CD4-positive, alpha-beta memory T cell (primary cell): ENCODE measurements at regions of chr14 and their contacts with region 1.

Region 1: DNA sequence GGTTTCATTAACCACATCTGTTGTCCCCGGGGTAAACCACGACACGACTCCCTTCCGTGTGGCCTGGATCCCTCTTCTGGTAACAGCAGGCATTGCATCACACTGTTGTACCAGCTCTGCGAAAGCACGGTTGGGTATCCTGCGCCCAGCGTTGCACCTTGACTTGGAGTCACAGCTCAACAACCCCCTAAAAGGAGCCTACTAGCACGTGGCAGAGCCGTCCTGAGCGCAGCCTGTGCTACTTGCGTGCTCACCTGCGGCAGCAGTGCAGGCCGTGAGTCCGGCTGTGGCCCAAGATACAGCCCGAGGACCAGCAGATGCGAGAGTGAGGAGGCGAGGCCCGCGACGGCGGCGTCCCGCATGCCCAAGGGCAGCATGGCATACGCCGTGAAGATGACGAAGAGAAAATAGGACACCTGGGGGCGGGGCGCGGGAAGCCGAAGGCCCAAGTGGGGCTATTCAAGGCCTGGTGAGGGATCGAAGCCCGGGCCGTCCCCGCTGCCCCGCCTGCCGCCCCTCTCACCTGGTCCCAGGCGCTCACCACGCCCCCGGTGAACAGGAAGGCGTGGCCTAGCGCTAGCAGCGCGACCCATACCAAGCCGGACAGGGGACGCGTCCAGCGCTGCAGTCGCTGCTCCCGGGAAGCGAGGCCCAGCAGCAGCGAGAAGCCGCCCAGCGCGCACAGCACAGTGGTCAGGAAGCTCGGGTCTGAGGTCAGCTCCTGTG is 2.4 kb downstream of the ADCY4 start:
- DNase-seq: peak; percentile 89 to 92 (median 90)
- H3K4me3 ChIP-seq: peak overlapping the region; percentile 24 to 51
- H3K4me3 Mint-ChIP-seq: peak overlapping the region; percentile 76 to 93 (median 87)
- H3K27ac ChIP-seq: no peak overlapping the region
- H3K27ac Mint-ChIP-seq: peak overlapping the region; percentile 65 to 98 (median 86)
- H3K4me1 ChIP-seq: peaks cover 64% of the 10 kb centered on the region
- H3K4me1 Mint-ChIP-seq: peaks cover 40 to 91% (median 59%) of the 10 kb centered on the region in 4 donors
- H3K27me3 ChIP-seq: peaks cover 11% of the 10 kb centered on the region
- H3K27me3 Mint-ChIP-seq: peaks cover 6 to 13% of the 10 kb centered on the region in 2 donors

Region 2: DNA sequence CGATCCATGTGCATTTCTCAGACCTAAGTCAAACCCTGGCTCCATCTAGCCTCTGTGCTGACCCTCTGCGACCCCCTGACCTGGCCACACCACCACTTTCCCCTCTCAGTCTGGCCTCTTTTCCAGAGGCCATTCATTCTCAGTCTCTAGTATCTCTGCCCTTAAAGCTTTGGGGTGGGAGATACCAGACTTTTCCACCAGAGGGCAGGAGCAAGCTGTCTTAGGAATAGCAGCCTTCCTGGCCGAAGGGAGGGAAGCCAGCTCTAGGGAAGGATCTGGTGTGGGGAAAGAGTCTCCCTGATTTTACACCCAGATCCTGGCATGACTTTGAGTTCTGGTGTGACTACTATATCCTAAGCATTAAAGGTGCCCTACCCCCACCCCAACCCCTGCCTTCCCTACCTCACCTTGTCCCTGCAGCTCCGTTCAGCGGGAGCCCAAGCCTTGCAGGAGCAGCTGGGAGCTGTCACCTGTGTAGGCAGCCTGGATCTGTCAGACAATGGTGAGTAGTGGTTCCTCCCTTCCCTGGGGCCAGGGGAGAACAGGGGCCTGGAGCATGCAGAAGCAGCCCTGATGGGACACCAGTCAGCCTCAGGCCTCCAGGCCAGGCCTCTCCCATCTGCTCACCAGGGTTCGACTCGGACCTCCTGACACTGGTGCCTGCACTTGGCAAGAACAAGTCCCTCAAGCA is 274.0 kb before region 1 on chr14:
- CTCF ChIA-PET with region 1: interaction called, 4 read pairs
- POLR2A ChIA-PET with region 1: no interaction called
- intact Hi-C with region 1: loop called (anchors 1 kb)
- DNase-seq: peak; percentile 49 to 63 (median 61)
- H3K4me3 ChIP-seq: no peak overlapping the region
- H3K4me3 Mint-ChIP-seq: peak overlapping the region in 1 of 8 donors; percentile 59
- H3K27ac ChIP-seq: no peak overlapping the region
- H3K27ac Mint-ChIP-seq: peak overlapping the region in 6 of 7 donors; percentile 10 to 81 (median 36)
- H3K4me1 ChIP-seq: no peaks in the 10 kb centered on the region
- H3K4me1 Mint-ChIP-seq: peaks cover 2 to 8% (median 3%) of the 10 kb centered on the region in 4 donors
- H3K27me3 ChIP-seq: no peaks in the 10 kb centered on the region
- H3K27me3 Mint-ChIP-seq: peaks cover 2% of the 10 kb centered on the region in 2 donors

Region 3: DNA sequence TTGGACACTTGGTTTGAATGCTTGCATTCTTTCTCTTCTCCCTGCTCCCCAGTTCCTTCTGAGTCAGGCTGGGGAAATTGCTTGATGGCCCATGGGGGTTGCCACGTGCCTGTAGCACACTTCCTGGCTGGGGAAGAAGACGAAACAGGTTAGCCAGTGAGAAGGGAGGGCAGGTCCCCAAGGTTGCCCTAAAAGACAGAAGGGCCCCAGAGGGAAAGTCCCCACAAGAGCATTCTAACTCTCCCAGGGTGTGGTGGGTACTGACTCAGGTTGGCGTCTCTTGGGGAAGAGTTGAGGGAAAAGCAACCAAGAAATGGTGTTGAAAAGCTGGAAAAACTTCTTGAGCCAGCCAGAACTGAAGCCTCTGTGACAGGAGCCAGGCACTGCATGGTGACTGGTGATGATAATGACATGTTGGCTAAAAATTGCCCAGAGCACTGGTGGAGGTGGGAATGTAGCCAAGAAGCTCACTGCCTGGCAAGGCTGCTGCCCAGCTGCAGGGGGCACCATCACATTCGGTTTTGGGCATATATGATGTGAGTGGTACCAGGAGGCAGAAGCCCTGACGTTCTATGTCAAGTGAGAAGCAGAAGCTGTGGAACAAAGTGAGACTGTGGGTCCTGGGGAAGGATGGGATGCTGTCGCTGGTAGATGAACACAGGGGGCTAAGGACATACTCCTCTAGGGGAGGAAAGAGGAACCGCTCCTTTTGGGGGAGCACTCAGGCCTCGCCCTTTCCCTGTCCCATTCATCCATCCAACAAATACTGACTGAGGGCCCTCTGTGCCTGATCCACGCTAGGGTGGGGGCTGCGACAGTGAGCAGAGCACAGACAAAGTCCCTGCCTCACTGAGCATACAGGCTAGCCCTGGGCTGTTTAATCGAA is 52.9 kb before region 1 on chr14:
- CTCF ChIA-PET with region 1: interaction called, 13 read pairs
- POLR2A ChIA-PET with region 1: interaction called, 4 read pairs
- intact Hi-C with region 1: no loop called
- DNase-seq: peak; percentile 46 to 85 (median 51)
- H3K4me3 ChIP-seq: no peak overlapping the region
- H3K4me3 Mint-ChIP-seq: peak overlapping the region in 4 of 8 donors; percentile 43 to 67 (median 46)
- H3K27ac ChIP-seq: peak overlapping the region; percentile 37
- H3K27ac Mint-ChIP-seq: peak overlapping the region; percentile 75 to 95 (median 91)
- H3K4me1 ChIP-seq: peaks cover 23% of the 10 kb centered on the region
- H3K4me1 Mint-ChIP-seq: peaks cover 21 to 44% (median 30%) of the 10 kb centered on the region in 4 donors
- H3K27me3 ChIP-seq: no peaks in the 10 kb centered on the region
- H3K27me3 Mint-ChIP-seq: no peaks in the 10 kb centered on the region

Region 4: GRCh38 chr14:24310646-24311604 is 21.5 kb before region 1 on chr14 and contains the start of gene LTB4R:
- CTCF ChIA-PET with region 1: interaction called, 232 read pairs
- POLR2A ChIA-PET with region 1: interaction called, 75 read pairs
- intact Hi-C with region 1: loop called (anchors 1 kb)
- DNase-seq: peak; percentile 73 to 79 (median 77)
- H3K4me3 ChIP-seq: peak within 1 kb of the TSS; percentile 55 to 58
- H3K4me3 Mint-ChIP-seq: peak within 1 kb of the TSS; percentile 83 to 94 (median 88)
- H3K27ac ChIP-seq: peak within 1 kb of the TSS; percentile 72
- H3K27ac Mint-ChIP-seq: peak within 1 kb of the TSS; percentile 90 to 97 (median 95)
- H3K4me1 ChIP-seq: peaks cover 71% of the 10 kb centered on the region
- H3K4me1 Mint-ChIP-seq: peaks cover 58 to 89% (median 72%) of the 10 kb centered on the region in 4 donors
- H3K27me3 ChIP-seq: no peaks in the 10 kb centered on the region
- H3K27me3 Mint-ChIP-seq: no peaks in the 10 kb centered on the region
- total RNA-seq, gene LTB4R: 19.5 to 20.0 TPM

Region 5: GRCh38 chr14:24343795-24344660 is 11.6 kb after region 1 on chr14:
- CTCF ChIA-PET with region 1: interaction called, 46 read pairs
- POLR2A ChIA-PET with region 1: interaction called, 6 read pairs
- intact Hi-C with region 1: no loop called
- DNase-seq: no peak
- H3K4me3 ChIP-seq: no peak overlapping the region
- H3K4me3 Mint-ChIP-seq: no peak overlapping the region
- H3K27ac ChIP-seq: no peak overlapping the region
- H3K27ac Mint-ChIP-seq: no peak overlapping the region
- H3K4me1 ChIP-seq: peaks cover 10% of the 10 kb centered on the region
- H3K4me1 Mint-ChIP-seq: peaks cover 7 to 16% (median 10%) of the 10 kb centered on the region in 4 donors
- H3K27me3 ChIP-seq: no peaks in the 10 kb centered on the region
- H3K27me3 Mint-ChIP-seq: peaks cover 12 to 23% of the 10 kb centered on the region in 2 donors

Region 6: DNA sequence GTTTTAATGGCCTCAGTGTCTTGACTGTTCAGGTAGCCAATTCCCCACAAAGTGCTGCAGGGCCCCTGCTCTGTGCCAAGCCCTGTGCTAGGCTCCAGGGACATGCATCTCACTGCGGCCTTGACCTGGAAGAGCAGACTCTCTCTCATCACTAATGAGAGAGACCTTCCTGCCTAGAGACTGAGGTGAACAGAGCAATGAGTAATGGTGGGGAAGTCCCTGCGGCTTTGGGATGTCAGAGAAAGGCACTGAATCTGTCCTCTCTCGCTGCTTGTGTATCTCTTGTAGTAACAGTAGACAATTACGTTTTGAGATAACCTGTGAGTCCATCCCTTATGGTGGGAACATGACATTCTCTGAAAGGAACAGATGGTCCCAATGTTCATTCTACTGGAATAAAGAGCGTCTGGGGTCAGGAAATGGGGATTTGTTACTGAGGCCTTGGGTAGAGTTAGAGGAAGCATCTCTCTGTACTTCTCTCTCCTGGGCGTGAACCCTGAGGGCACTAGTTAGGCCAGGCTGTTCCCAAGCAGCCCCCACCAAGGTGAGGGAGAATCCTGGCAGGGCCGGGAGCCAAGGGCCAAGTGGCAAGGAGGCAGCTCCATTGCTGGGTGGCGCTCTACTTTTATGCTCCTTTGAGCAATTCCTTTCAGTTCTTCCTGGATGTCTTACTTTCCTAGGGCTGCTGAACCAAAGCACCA is 49.1 kb after region 1 on chr14:
- CTCF ChIA-PET with region 1: no interaction called
- POLR2A ChIA-PET with region 1: no interaction called
- intact Hi-C with region 1: no loop called
- DNase-seq: no peak
- H3K4me3 ChIP-seq: no peak overlapping the region
- H3K4me3 Mint-ChIP-seq: peak overlapping the region in 1 of 8 donors; percentile 22
- H3K27ac ChIP-seq: no peak overlapping the region
- H3K27ac Mint-ChIP-seq: no peak overlapping the region
- H3K4me1 ChIP-seq: no peaks in the 10 kb centered on the region
- H3K4me1 Mint-ChIP-seq: no peaks in the 10 kb centered on the region
- H3K27me3 ChIP-seq: no peaks in the 10 kb centered on the region
- H3K27me3 Mint-ChIP-seq: peaks cover 5 to 6% of the 10 kb centered on the region in 2 donors

Region 7: DNA sequence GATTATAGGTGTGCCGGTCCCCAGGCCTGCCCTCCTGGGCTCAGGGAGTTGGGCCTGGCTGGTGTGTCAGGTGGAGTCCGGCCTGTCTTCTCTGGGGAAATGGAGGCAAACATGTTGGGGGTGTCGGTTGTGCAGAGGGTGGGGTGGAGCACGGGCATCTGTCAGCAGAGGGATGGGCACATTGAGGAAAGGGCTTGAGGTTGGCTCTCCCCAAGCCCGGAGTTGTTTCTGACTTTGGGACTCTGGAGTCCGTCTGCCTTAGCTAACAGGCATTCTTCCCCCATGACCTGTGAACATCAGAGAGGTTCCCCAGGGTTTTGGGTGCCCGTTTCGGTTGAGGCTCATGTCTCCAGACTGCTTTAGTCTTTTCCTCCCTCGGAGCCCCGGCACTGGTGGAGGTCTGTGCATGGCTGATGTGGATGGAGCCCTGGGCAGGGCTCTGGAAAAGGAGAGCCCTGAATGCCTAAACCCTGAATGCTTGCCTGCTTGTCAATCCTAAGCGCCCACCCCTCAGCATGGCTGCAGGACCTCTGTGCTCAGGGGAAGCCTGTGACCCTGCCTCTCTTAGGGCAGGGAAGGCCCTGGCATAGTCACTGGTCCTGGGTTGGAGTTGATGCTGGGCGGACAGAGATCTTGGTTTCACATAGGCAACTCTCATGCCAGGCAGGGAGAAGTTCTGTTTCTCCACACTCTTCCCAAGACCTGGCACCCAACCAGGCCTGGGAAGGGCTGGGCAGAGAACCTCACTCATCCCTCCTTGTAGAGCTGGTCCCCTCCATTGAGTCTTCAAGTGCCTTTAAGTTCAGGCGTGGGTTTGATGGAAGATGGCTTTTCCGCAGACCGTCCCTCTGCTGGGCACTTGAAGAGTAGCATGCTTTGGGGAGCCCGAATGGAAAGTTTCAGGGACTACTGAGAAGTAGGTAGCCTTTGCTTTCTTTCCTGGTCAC is 79.3 kb after region 1 on chr14:
- CTCF ChIA-PET with region 1: interaction called, 19 read pairs
- POLR2A ChIA-PET with region 1: no interaction called
- intact Hi-C with region 1: no loop called
- DNase-seq: peak in 4 of 5 donors; percentile 26 to 34 (median 29)
- H3K4me3 ChIP-seq: no peak overlapping the region
- H3K4me3 Mint-ChIP-seq: no peak overlapping the region
- H3K27ac ChIP-seq: no peak overlapping the region
- H3K27ac Mint-ChIP-seq: no peak overlapping the region
- H3K4me1 ChIP-seq: no peaks in the 10 kb centered on the region
- H3K4me1 Mint-ChIP-seq: no peaks in the 10 kb centered on the region
- H3K27me3 ChIP-seq: no peaks in the 10 kb centered on the region
- H3K27me3 Mint-ChIP-seq: peaks cover 0 to 2% of the 10 kb centered on the region in 2 donors